ENCODE measurements at regions of chr22 and their contacts with region 1.

Region 1: DNA sequence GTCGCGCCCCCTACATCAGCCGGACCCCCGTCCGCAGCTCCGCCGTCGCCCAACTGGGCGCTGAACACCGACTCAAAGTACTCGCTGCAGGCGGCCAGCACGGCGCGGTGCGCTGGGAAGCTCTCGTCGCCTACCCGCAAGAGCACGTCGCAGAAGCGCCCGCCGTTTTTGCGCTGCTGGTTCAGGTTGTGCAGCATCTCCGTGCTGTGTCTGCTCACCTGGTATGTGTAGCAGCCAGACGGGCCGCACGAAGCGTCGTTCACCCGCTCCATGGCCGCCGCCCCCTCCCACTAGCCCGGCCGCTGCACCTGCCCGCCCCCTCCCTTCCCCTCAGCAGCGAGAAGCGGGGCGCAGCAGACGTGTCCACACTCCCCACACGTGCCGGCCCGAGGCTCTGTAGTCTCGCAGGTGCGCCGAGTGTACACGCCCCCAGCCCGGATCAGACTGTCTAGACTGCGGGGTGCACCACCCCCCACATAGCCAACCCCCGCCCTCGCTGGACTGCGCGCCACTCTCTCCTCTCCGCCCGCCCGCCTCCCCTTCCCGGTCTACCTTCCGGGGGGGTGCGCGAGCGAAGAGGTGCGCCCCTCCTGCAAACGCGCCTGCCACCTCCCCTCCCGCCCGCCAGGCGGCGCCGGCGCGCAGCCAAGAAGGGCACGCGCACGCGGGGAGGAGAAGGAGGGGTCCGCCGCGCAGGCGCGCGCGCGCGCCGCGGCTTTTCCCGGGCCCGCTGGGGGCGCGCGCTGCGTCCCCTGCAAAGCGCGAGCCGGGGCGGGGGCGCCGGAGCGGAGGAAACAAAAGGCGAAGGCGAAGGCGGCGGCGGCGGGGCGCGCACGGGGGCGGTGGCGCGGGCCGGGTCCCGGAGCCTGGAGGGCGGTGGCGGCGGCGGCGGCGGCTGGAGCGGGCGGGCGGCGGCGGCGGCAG is 553 bp downstream of the PATZ1 start:
- DNase-seq: peak; percentile 86 to 96 (median 93)
- H3K4me3 ChIP-seq: peak overlapping the region; percentile 76
- H3K4me3 Mint-ChIP-seq: peak overlapping the region; percentile 86 to 97 (median 90)
- H3K27ac ChIP-seq: peak overlapping the region; percentile 16
- H3K27ac Mint-ChIP-seq: peak overlapping the region; percentile 91 to 100 (median 94)
- H3K4me1 ChIP-seq: peaks cover 48% of the 10 kb centered on the region
- H3K4me1 Mint-ChIP-seq: peaks cover 45 to 58% (median 48%) of the 10 kb centered on the region in 3 donors
- H3K27me3 ChIP-seq: no peaks in the 10 kb centered on the region
- H3K27me3 Mint-ChIP-seq: peaks cover 0 to 1% of the 10 kb centered on the region in 2 donors

Region 2: GRCh38 chr22:31179356-31179755 is 166.2 kb before region 1 on chr22:
- CTCF ChIA-PET with region 1: no interaction called
- POLR2A ChIA-PET with region 1: no interaction called
- DNase-seq: no peak
- H3K4me3 ChIP-seq: no peak overlapping the region
- H3K4me3 Mint-ChIP-seq: no peak overlapping the region
- H3K27ac ChIP-seq: no peak overlapping the region
- H3K27ac Mint-ChIP-seq: peak overlapping the region in 1 of 8 donors; percentile 36
- H3K4me1 ChIP-seq: no peaks in the 10 kb centered on the region
- H3K4me1 Mint-ChIP-seq: peaks cover 9 to 37% (median 37%) of the 10 kb centered on the region in 3 donors
- H3K27me3 ChIP-seq: no peaks in the 10 kb centered on the region
- H3K27me3 Mint-ChIP-seq: no peaks in the 10 kb centered on the region

Region 3: DNA sequence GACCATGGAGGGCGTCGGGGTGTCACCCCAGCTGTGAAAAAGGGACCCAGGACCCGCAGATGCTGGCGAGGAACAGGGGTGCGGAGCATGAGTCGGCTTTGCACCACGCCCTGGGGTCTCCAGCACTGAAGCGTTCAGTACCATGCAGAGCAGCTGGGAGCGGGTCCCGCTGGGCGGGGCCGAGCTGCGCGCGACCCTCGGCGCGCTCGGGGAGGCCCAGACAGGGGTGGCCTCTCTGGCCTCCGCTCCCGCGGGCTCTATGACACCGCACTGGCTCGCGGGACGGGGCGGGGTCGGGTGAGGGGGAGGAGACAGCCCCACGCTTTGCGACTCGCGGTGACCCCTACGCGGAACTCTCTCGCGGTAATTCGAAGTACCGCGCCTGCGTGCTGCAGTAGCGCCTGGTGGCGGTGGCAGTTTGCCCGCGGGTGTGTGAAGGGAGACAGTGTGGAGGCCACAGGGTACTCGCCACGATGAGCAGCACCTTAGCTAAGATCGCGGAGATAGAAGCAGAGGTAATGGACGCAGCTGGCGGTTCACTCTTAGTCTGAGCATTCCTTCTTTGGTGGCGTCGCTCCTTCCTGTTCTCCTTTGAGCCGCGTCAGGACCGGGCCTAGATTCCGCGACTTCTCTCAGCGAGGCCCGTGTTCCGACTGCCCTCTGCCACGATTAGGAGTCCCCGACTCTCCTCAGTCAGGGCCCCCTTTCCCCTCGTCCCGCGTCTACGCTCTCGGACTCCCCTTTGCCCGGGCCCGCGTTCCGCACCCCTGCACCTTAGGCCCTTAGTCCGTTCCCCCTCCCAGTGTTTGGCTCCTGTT is 53.8 kb after region 1 on chr22 and contains the start of gene DRG1:
- CTCF ChIA-PET with region 1: interaction called, 3 read pairs
- POLR2A ChIA-PET with region 1: interaction called, 13 read pairs
- DNase-seq: peak; percentile 94 to 97 (median 95)
- H3K4me3 ChIP-seq: peak within 1 kb of the TSS; percentile 74
- H3K4me3 Mint-ChIP-seq: peak within 1 kb of the TSS; percentile 95 to 99 (median 96)
- H3K27ac ChIP-seq: peak within 1 kb of the TSS; percentile 80
- H3K27ac Mint-ChIP-seq: peak within 1 kb of the TSS; percentile 94 to 99 (median 96)
- H3K4me1 ChIP-seq: peaks cover 20% of the 10 kb centered on the region
- H3K4me1 Mint-ChIP-seq: peaks cover 23 to 32% (median 30%) of the 10 kb centered on the region in 3 donors
- H3K27me3 ChIP-seq: no peaks in the 10 kb centered on the region
- H3K27me3 Mint-ChIP-seq: peaks cover 2% of the 10 kb centered on the region in 2 donors
- total RNA-seq, gene DRG1: 115 to 117 TPM